ENCODE measurements at regions of chr2 and their contacts with region 1.

Region 1: DNA sequence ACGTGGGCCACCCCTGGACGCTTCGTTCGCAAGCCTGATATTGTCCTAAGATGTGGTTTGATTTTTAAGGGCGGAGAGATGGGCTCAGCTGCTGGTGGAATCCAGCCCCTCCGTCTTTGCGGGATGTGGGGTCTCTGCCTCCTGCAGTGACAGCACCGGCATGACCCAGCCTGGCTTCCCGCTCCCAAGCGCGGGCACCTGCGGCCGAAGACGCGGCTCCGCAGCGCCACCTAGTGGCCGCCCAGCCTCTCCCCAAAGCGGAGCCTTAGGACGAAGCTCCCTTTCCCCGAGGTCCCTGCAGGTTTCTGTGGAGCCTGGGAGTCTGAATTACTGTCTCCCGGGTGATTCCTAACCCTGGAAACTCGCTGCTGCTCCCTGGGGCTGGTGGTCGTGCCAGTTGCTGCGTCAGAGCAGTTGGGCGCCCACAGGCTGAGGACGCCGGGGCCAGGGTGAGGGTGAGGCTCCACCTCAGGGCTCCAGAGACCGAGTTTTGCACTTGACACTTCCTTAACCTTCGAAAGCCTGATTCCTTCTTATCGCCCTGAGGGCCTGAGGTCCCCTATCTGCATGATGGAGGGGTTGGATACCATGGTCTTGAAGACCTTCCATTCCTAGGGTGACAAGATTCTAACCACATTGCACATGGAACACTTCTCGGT is 137.5 kb downstream of the TPO start:
- DNase-seq: peak; percentile 18
- ATAC-seq: peak; percentile 94
- H3K4me3 ChIP-seq: no peak overlapping the region
- H3K27ac ChIP-seq: no peak overlapping the region
- H3K4me1 ChIP-seq: peaks cover 0 to 7% of the 10 kb centered on the region in 2 experiments; a peak in 2 of 4 replicates
- H3K27me3 ChIP-seq: no peaks in the 10 kb centered on the region
- CTCF ChIP-seq: peak; percentile 59 to 96 (median 83)
- POLR2A ChIP-seq: no peak
- RAD21 ChIP-seq: peak; percentile 62

Region 2: DNA sequence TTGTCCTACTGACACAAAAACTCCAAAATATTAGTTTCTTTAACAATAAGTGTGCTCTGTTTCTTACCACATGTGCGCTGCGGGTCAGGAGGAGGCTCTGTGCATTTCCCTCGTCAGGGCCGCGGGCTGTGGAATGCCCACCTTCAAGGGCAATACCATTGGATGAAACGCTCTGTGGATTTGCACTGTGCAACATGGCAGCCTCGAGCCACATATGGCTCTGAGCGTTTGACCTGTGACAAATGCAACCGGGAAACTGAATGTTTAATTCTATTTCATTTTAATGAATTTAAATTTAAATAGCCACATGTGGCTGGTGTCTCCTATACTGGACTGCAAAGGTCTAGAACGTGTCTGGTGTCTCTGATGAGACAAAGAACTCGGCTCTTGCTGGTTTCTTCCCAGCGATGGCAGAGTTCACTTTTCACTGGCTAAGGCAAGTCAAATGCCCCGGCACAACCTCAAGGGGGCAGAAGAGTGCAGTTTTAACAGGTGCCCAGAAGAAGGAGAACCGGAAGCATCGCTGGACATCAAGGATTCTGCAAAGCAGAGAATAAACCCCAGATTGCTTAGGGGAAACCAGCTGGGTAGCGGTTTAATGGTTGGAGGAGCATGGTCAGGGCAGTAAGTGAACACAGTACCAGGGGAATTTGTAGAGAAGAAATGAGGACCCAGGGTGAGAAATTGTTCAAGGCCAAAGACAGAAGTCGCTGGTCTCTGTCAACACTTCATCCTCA is 836.6 kb before region 1 on chr2:
- CTCF ChIA-PET with region 1: interaction called, 4 read pairs
- POLR2A ChIA-PET with region 1: no interaction called
- RAD21 ChIA-PET with region 1: no interaction called
- intact Hi-C with region 1: loop called (anchors 2 kb)
- DNase-seq: peak; percentile 46
- ATAC-seq: peak; percentile 94
- H3K4me3 ChIP-seq: no peak overlapping the region
- H3K27ac ChIP-seq: no peak overlapping the region
- H3K4me1 ChIP-seq: no peaks in the 10 kb centered on the region; a peak in 1 of 4 replicates
- H3K27me3 ChIP-seq: peaks cover 18% of the 10 kb centered on the region
- CTCF ChIP-seq: peak; percentile 61 to 91 (median 85)
- POLR2A ChIP-seq: no peak
- RAD21 ChIP-seq: peak; percentile 82

Region 3: GRCh38 chr2:953975-954686 is 596.7 kb before region 1 on chr2:
- CTCF ChIA-PET with region 1: interaction called, 12 read pairs
- POLR2A ChIA-PET with region 1: no interaction called
- RAD21 ChIA-PET with region 1: interaction called in 1 of 2 experiments, 4 read pairs
- intact Hi-C with region 1: loop called (anchors 1 kb)
- DNase-seq: no peak
- ATAC-seq: peak; percentile 62; the same call in 1 of the 2 replicates
- H3K4me3 ChIP-seq: no peak overlapping the region
- H3K27ac ChIP-seq: no peak overlapping the region
- H3K4me1 ChIP-seq: no peaks in the 10 kb centered on the region
- H3K27me3 ChIP-seq: peaks cover 12% of the 10 kb centered on the region; the same call in 1 of the 2 replicates
- CTCF ChIP-seq: peak in 2 of 3 experiments; percentile 12 to 22; a peak in 1 of 6 replicates
- POLR2A ChIP-seq: no peak
- RAD21 ChIP-seq: peak; percentile 62

Region 4: GRCh38 chr2:1246239-1246638 is 304.5 kb before region 1 on chr2:
- CTCF ChIA-PET with region 1: interaction called, 3 read pairs
- POLR2A ChIA-PET with region 1: no interaction called
- RAD21 ChIA-PET with region 1: no interaction called
- intact Hi-C with region 1: loop called (anchors 2 kb)
- DNase-seq: no peak
- ATAC-seq: peak; percentile 76
- H3K4me3 ChIP-seq: no peak overlapping the region
- H3K27ac ChIP-seq: no peak overlapping the region
- H3K4me1 ChIP-seq: no peaks in the 10 kb centered on the region
- H3K27me3 ChIP-seq: peaks cover 24% of the 10 kb centered on the region
- CTCF ChIP-seq: peak in 2 of 3 experiments; percentile 40 to 44; a peak in 3 of 6 replicates
- POLR2A ChIP-seq: no peak
- RAD21 ChIP-seq: peak; percentile 23; the same call in 1 of the 2 replicates

Region 5: GRCh38 chr2:1301056-1301455 is 249.7 kb before region 1 on chr2:
- CTCF ChIA-PET with region 1: no interaction called
- POLR2A ChIA-PET with region 1: no interaction called
- RAD21 ChIA-PET with region 1: no interaction called
- intact Hi-C with region 1: no loop called
- DNase-seq: no peak
- ATAC-seq: no peak
- H3K4me3 ChIP-seq: no peak overlapping the region
- H3K27ac ChIP-seq: no peak overlapping the region
- H3K4me1 ChIP-seq: no peaks in the 10 kb centered on the region
- H3K27me3 ChIP-seq: peaks cover 68% of the 10 kb centered on the region
- CTCF ChIP-seq: no peak
- POLR2A ChIP-seq: no peak
- RAD21 ChIP-seq: no peak

Region 6: DNA sequence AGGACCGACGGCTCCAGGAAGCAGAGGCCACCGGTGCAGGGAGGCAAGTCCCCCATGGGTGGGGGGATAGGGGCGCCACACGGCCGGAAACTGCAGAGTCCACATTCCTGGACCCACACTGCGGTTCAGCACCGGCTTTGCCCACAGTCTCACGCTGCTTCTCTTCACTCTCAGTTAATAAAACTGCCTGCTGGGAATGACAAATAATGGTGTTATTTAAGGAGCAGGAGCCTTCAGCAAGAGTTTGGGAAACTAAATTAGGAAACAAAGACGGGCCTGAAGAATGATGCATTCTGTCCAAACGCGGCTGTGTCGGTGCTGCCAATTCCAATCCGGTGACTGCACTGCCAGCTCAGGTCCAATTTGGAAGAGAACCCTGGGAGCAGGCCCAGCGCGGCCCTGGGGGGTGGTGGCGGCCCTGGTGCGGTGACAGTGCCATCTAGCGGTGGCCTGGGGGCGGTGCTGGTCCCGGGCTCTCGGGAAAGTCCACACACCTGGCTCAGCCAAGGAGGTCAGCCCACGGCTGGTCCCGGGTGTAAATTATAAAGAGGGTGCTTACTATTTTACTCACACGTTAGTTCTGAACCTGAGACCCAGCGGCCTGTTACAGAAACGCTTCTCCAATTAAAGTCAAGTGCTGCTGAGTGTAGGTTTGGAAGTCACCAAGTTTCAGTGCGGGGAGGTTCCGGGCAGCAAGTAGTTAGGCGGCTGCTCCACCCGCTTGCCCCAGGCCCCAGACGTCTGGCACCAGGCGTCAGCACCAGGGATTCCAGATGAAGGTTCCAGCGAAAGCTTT is 266.7 kb after region 1 on chr2:
- CTCF ChIA-PET with region 1: no interaction called
- POLR2A ChIA-PET with region 1: no interaction called
- RAD21 ChIA-PET with region 1: no interaction called
- intact Hi-C with region 1: loop called (anchors 2 kb)
- DNase-seq: peak; percentile 8
- ATAC-seq: peak; percentile 99
- H3K4me3 ChIP-seq: no peak overlapping the region
- H3K27ac ChIP-seq: no peak overlapping the region
- H3K4me1 ChIP-seq: peaks cover 4% of the 10 kb centered on the region in 2 experiments
- H3K27me3 ChIP-seq: no peaks in the 10 kb centered on the region
- CTCF ChIP-seq: peak; percentile 47 to 97 (median 95)
- POLR2A ChIP-seq: no peak
- RAD21 ChIP-seq: peak; percentile 76